ENCODE measurements at regions of chr11 and their contacts with region 1.

Region 1: DNA sequence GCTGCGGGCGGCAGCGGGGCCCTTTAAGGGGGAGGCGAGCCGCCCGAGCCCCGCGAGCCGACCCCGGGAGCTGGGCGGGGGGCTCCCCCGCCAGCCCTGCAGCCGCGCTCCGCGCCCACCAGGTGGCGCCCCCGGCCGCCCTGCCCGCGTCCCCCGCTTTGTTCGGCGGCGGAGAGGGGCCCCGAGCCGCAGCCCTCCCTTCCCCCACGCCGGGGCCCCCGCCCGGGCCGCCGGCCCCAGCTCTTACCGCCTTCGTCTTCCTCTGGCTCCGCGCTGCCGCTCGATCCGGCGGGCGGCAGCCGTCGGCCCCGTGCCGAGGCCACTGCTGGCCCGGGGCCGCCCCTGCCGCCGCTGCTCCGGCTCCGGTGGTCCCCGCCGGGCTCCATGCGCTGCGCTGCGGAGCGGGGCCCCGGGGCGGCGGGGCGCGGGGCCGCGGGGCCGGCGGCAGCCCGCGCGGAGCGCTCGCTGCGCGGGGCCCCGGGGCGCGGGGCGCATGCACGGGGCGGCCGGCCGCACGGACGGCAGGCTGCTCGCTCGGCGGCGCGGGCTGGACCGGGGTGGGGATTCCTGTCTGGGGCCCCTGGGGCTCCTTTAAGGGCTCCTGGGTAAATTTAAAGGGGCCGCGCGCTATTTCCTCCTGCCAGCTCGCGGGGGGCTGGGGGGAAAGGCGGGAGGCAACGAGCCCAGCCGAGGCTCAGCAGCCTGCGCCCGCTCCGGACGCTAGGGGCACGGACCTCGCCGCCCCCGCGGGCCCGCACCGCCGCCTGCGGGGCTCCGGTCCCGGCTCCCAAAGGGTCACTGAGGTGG is at the start of gene ZFTA:
- DNase-seq: peak; percentile 51 to 68
- ATAC-seq: peak; percentile 50 to 59
- H3K4me3 ChIP-seq: peak within 1 kb of the TSS; percentile 63
- H3K27ac ChIP-seq: peak within 1 kb of the TSS; percentile 89 to 99
- H3K4me1 ChIP-seq: peaks cover 30% of the 10 kb centered on the region
- CTCF ChIP-seq: peak; percentile 95
- EP300 ChIP-seq: no peak
- POLR2A ChIP-seq: no peak
- RAD21 ChIP-seq: peak; percentile 34 to 81; a peak in 4 of 5 replicates
- polyA plus RNA-seq, gene ZFTA: 2.4 and 3.0 TPM in 2 replicates

Region 2: DNA sequence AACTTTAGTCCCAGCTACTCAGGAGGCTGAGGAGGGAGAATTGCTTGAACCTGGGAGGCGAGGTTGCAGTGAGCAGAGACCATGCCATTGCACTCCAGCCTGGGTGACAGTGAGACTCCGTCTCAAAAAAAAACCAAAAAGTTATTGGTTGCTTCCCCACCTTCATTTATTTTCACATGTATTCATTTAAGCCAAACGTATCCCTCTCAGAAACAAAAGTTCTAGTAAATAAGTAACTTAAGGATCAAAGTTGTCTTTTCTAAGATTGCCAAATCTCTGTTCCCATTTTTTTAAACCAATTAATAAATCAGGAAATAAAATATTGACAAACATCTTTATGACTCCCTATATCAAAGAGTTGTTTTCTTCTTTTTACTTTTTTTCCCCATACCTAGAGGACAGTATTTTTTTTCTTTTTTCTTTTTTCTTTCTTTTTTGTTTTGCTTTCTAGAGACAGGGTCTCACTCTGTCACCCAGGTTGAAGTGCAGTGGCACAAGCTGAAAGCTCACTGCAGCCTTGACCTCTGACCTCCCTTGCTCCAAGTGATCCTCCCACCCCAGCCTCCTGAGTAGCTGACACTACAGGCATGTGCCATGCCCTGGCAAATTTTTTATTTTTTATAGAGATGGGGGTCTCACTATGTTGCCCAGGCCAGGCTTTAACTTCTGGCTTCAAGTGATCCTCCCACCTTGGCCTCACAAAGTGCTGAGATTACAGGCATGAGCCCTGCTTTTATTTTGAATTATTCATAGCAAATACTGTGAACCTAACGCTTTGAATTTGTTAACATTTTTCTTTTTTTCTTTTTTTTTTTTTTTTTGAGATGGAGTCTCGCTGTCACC is 11.3 kb before region 1 on chr11:
- CTCF ChIA-PET with region 1: interaction called, 14 read pairs
- POLR2A ChIA-PET with region 1: interaction called, 4 read pairs
- DNase-seq: no peak
- ATAC-seq: no peak
- H3K4me3 ChIP-seq: no peak overlapping the region
- H3K27ac ChIP-seq: no peak overlapping the region
- H3K4me1 ChIP-seq: no peaks in the 10 kb centered on the region
- CTCF ChIP-seq: no peak
- EP300 ChIP-seq: no peak
- POLR2A ChIP-seq: no peak
- RAD21 ChIP-seq: no peak

Region 3: GRCh38 chr11:63779039-63779438 is 10.6 kb after region 1 on chr11:
- CTCF ChIA-PET with region 1: interaction called, 10 read pairs
- POLR2A ChIA-PET with region 1: no interaction called
- DNase-seq: no peak
- ATAC-seq: no peak
- H3K4me3 ChIP-seq: no peak overlapping the region
- H3K27ac ChIP-seq: no peak overlapping the region
- H3K4me1 ChIP-seq: peaks cover 6% of the 10 kb centered on the region; the same call in 2 of the 3 replicates
- CTCF ChIP-seq: no peak
- EP300 ChIP-seq: no peak
- POLR2A ChIP-seq: no peak
- RAD21 ChIP-seq: no peak

Region 4: GRCh38 chr11:63813035-63813562 is 44.7 kb after region 1 on chr11 and contains the start of gene SPINDOC:
- CTCF ChIA-PET with region 1: interaction called, 32 read pairs
- POLR2A ChIA-PET with region 1: interaction called, 3 read pairs
- DNase-seq: peak; percentile 60 to 89
- ATAC-seq: peak; percentile 89 to 91
- H3K4me3 ChIP-seq: peak within 1 kb of the TSS; percentile 94
- H3K27ac ChIP-seq: peak within 1 kb of the TSS; percentile 96 to 97
- H3K4me1 ChIP-seq: peaks cover 17% of the 10 kb centered on the region
- CTCF ChIP-seq: no peak
- EP300 ChIP-seq: no peak
- POLR2A ChIP-seq: peak; percentile 55
- RAD21 ChIP-seq: no peak
- polyA plus RNA-seq, gene SPINDOC: 15.6 and 17.6 TPM in 2 replicates

Region 5: GRCh38 chr11:63821411-63821810 is 53.0 kb after region 1 on chr11:
- CTCF ChIA-PET with region 1: interaction called, 32 read pairs
- POLR2A ChIA-PET with region 1: no interaction called
- DNase-seq: no peak
- ATAC-seq: no peak
- H3K4me3 ChIP-seq: no peak overlapping the region
- H3K27ac ChIP-seq: no peak overlapping the region
- H3K4me1 ChIP-seq: no peaks in the 10 kb centered on the region
- CTCF ChIP-seq: no peak
- EP300 ChIP-seq: no peak
- POLR2A ChIP-seq: no peak
- RAD21 ChIP-seq: no peak